ENCODE measurements at regions of chr17 and their contacts with region 1.

Region 1: DNA sequence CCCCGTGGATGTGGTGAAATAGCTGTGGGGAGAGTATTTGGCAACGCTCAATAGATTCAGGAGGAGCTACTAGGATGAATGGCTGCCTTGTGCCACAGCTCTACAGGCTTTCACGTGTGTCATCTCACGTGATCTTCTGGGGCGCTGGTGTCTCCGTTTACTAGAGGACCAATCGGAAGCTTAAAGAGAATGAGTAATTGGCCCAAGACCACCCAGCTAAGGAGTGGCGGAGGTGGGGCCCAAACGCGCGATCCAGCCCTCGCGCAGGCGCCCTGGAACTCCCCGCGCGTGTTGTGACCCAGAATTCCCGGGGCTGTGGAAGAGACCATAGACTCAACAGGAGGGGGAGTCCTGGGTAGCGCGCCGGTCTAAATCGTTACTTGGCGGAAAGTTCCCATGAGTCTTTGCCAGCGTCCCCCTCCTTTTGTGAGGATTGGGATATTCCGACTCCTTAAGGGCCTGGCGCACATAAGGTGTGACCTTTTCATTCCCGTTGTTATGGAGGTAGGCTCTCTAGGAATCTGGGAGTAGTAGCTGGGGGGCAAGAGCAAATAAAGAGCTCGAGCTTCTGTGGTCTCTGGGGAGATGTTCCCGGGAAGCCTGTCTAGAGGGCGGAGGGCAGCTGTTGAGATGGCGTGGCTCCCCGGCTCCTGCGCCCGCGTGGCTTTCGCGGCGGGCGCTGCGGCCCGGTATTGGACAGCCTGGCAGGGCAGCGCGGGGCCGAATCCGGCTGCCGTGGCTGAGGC is 23.4 kb downstream of the TRPV2 start:
- DNase-seq: peak; percentile 97
- ATAC-seq: peak; percentile 91
- H3K4me3 Mint-ChIP-seq: peak overlapping the region; percentile 99
- H3K27ac Mint-ChIP-seq: peak overlapping the region; percentile 99
- H3K4me1 Mint-ChIP-seq: peaks cover 40% of the 10 kb centered on the region
- H3K27me3 Mint-ChIP-seq: no peaks in the 10 kb centered on the region

Region 2: DNA sequence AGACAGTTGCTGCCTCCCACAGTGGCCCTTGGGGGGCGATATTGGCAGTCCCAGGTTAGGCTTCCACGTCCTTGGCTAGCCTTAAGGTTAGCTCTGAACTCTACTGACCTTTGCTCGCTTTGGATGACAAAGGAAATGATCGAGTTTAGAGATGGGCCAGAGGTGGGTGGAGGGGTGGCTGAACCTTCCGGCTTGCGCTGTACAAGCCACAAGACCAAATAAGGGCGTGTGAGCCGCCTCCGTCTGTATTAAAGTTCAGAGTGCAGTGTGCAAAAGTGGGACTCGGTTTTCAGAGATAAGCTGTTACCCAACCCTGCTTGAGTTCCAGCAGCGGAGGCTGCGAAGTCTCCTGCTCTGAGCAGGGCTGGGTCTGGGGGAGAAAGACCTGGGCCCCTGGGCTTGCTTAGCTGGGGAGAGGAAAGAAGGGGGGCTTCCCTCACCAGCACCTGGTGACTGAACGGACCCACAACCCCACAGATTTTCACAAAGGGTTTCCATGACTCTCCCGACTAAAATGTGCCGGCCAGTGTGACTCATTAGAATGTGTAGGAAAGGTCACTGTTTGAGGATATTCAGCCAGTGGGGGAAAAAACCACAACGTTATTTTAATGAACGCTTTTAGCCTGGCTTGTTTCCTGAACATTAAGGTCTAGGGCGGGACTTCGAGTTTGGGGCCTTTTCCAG is 152.6 kb before region 1 on chr17:
- CTCF ChIA-PET with region 1: no interaction called
- POLR2A ChIA-PET with region 1: interaction called, 3 read pairs
- intact Hi-C with region 1: loop called in 1 of 2 experiments (anchors 5 kb)
- DNase-seq: peak; percentile 90
- ATAC-seq: peak; percentile 94
- H3K4me3 Mint-ChIP-seq: peak overlapping the region; percentile 66
- H3K27ac Mint-ChIP-seq: peak overlapping the region; percentile 96
- H3K4me1 Mint-ChIP-seq: peaks cover 53% of the 10 kb centered on the region
- H3K27me3 Mint-ChIP-seq: no peaks in the 10 kb centered on the region

Region 3: DNA sequence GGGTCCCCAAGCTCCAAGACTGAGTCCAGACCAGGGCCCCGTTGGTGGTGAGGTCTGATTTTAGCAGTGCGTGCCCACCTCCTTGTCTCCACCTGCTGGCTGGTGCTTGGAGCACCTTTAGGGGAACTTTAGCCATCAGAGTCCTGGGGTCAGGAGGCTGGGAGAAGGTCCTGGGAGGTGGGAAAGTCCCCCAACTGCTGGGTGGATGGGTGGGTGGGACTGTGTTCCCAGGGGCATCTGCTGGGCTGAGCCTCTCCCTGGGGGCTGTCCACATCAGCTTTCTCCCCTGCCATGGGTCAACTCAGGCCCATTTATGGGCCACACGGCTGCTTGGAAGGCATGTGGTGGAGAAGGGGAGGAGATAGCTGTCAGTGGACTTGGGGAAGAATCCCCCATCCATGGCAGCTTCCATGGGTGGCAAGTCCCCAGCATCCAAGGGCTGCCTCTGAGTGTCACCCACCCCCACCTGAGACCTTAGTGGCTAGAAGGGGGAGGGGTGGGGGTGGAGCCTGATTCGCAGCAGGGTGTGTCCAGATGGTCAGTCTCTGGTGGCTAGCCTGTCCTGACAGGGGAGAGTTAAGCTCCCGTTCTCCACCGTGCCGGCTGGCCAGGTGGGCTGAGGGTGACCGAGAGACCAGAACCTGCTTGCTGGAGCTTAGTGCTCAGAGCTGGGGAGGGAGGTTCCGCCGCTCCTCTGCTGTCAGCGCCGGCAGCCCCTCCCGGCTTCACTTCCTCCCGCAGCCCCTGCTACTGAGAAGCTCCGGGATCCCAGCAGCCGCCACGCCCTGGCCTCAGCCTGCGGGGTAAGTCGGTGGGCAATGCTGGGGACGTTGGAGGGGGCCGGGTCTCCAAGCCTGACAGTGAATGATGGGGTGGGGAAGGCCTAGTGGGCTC is 23.5 kb before region 1 on chr17 and contains the start of gene TRPV2:
- CTCF ChIA-PET with region 1: interaction called, 7 read pairs
- POLR2A ChIA-PET with region 1: interaction called, 29 read pairs
- intact Hi-C with region 1: loop called (anchors 1 kb)
- DNase-seq: peak; percentile 72
- ATAC-seq: peak; percentile 15
- H3K4me3 Mint-ChIP-seq: peak within 1 kb of the TSS; percentile 100
- H3K27ac Mint-ChIP-seq: peak within 1 kb of the TSS; percentile 99
- H3K4me1 Mint-ChIP-seq: peaks cover 46% of the 10 kb centered on the region
- H3K27me3 Mint-ChIP-seq: no peaks in the 10 kb centered on the region
- total RNA-seq, gene TRPV2: 24.3 to 35.6 TPM

Region 4: GRCh38 chr17:16521070-16521727 is 82.5 kb after region 1 on chr17:
- CTCF ChIA-PET with region 1: interaction called, 12 read pairs
- POLR2A ChIA-PET with region 1: no interaction called
- intact Hi-C with region 1: no loop called
- DNase-seq: peak; percentile 80
- ATAC-seq: peak; percentile 95
- H3K4me3 Mint-ChIP-seq: no peak overlapping the region
- H3K27ac Mint-ChIP-seq: no peak overlapping the region
- H3K4me1 Mint-ChIP-seq: peaks cover 8% of the 10 kb centered on the region
- H3K27me3 Mint-ChIP-seq: peaks cover 31% of the 10 kb centered on the region

Region 5: DNA sequence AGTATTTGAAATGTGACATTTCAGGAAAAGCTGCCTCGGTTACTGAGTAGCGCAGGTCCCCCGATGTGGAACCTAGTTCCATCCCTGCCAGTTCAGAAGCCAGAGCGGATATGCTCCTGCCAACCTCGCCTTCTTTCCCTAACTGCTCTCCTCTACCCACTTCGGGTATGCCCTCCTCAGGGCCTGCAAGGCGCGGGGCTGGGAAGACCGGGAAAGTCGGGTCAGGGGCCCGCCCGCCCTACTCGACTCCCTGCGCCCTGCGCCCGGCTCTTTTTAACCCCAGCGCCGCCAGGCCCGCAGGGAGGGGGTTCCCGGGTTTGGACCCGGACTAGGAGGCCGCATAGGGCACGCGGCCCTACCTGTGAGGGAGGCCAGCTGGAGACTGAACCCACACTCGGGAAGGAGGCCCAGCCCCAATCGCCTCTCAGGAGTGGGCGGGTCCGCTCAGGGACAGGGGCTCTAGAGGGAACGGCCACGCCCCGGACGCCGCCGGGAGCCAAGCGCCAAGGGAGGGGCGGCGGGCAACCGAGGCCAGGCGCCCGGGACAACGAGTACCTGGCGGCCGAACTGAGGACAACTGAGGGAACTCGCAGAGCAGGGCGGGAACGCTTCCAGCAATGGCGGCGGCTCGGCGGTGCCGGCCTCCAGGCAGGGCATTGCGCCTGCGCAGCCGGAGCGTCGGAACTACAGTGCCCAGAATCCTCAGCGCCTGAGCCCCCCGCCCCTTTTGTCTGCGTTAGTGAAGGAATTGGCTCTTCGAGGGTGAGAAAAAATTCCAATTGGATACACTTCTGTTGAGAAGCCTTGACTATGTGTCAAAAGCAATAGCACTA is 214.7 kb after region 1 on chr17 and contains the start of gene ZNF624:
- CTCF ChIA-PET with region 1: no interaction called
- POLR2A ChIA-PET with region 1: no interaction called
- intact Hi-C with region 1: loop called in 1 of 2 experiments (anchors 2 kb)
- DNase-seq: peak; percentile 94
- ATAC-seq: peak; percentile 97
- H3K4me3 Mint-ChIP-seq: peak within 1 kb of the TSS; percentile 81
- H3K27ac Mint-ChIP-seq: peak within 1 kb of the TSS; percentile 73
- H3K4me1 Mint-ChIP-seq: peaks cover 18% of the 10 kb centered on the region
- H3K27me3 Mint-ChIP-seq: peaks cover 5% of the 10 kb centered on the region
- total RNA-seq, gene ZNF624: 3.7 to 4.4 TPM

Measured in activated CD4-positive, alpha-beta T cell treated with anti-CD3 and anti-CD28 coated beads for 36 hours (primary cell).